ENCODE measurements at regions of chr13 and their contacts with region 1.

Region 1: GRCh38 chr13:24217601-24218281 is 57.2 kb downstream of the SPATA13 start:
- DNase-seq: no peak
- H3K4me3 ChIP-seq: no peak overlapping the region
- H3K27ac ChIP-seq: peak overlapping the region; percentile 68
- H3K4me1 ChIP-seq: peaks cover 62% of the 10 kb centered on the region
- H3K27me3 ChIP-seq: no peaks in the 10 kb centered on the region
- CTCF ChIP-seq: no peak

Region 2: GRCh38 chr13:23934520-23934919 is 283.2 kb before region 1 on chr13:
- intact Hi-C with region 1: loop called (anchors 5 kb)
- DNase-seq: no peak
- H3K4me3 ChIP-seq: no peak overlapping the region
- H3K27ac ChIP-seq: no peak overlapping the region
- H3K4me1 ChIP-seq: no peaks in the 10 kb centered on the region
- H3K27me3 ChIP-seq: peaks cover 13% of the 10 kb centered on the region
- CTCF ChIP-seq: no peak

Region 3: DNA sequence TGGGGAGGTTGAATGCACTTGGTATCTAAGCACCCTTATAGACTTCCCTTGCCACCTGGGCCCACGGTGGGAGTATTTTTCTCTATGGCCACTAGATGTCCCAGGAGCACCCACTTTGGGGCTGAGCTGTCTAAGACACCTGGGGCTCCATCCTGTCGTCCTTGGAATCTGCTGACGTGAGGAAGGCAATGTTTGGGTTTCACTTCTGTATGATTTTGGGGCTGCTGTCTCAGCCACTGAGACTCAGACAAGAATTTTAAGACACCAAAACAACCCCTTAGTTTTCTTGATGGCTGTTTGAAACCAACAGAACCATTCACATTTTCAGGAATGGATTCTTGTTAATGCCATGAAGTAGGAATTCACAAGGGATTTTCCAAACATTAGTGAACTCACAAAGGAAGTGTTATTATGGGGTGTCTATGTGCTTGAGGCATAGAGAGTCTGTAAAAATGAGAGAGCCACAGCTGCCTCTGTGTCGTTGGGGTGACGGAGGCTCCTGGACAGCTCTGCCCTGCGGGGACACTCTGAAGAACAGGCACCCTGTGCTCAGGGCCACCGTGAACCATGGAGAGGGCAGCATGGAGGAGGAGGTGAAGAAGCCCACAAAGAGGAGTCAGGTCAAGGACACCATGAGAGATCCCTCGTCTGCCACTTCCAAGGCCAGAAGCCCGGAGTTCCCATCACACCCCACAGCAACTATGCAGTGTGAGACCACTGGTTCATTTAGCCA is 164.1 kb before region 1 on chr13:
- intact Hi-C with region 1: loop called (anchors 10 kb)
- DNase-seq: no peak
- H3K4me3 ChIP-seq: no peak overlapping the region
- H3K27ac ChIP-seq: peak overlapping the region; percentile 67
- H3K4me1 ChIP-seq: peaks cover 53% of the 10 kb centered on the region
- H3K27me3 ChIP-seq: no peaks in the 10 kb centered on the region
- CTCF ChIP-seq: peak; percentile 81

Measured in left ventricle myocardium inferior (tissue), 1 donor.